AG04450 (cell line): ENCODE measurements at regions of chr5 and their contacts with region 1.

Region 1: GRCh38 chr5:14650052-14650451 is 14.5 kb upstream of the OTULIN start:
- DNase-seq: no peak
- H3K4me3 ChIP-seq: no peak overlapping the region
- H3K27ac ChIP-seq: no peak overlapping the region
- H3K27me3 ChIP-seq: peaks cover 5% of the 10 kb centered on the region
- CTCF ChIP-seq: no peak

Region 2: DNA sequence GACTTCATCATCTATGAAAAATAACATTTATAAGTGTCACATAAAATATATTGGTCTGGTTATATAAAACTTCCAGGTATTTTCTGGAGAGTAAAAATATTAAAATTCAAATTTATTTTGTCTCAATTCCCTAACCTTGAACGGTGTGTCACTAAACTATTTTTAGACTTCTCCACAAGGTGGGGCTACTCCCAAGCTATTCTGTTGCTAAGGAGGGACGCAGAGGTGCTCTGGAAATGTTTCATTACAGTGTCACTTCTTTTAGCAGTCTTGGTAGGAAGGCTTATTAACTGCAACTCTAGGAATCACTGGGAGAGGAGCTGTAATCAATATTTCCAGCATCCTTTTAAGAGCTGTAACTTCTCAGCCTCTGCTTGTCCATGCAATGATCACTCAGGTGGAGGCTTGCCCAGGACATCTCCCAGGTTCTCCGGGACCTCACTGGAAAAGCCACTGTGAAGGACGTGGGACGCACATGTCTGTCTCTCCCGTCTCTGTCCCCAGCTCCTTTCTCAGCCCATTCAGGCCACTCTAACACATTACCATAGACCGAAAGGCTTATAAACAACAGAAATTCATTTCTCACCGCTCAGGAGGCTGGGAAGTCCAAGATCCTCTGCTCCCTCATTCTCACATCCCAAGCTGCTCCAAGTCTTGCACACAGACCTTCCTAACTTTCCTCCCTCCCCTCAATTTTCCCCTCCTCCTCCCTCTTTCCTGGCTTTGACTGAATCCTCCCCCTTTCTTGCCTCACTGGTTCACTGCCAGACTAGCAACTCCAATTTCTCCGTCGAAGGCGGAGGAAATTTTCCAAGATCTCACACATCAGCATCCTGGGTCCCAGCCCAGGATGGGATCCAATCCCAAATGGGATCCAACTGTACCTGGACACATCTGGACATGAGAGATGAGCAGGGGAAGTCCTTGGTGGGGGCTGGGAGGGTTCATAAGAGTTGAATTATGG is 672.9 kb before region 1 on chr5:
- CTCF ChIA-PET with region 1: interaction called, 28 read pairs
- POLR2A ChIA-PET with region 1: no interaction called
- DNase-seq: no peak
- H3K4me3 ChIP-seq: no peak overlapping the region
- H3K27ac ChIP-seq: no peak overlapping the region
- H3K27me3 ChIP-seq: no peaks in the 10 kb centered on the region
- CTCF ChIP-seq: peak; percentile 59

Region 3: DNA sequence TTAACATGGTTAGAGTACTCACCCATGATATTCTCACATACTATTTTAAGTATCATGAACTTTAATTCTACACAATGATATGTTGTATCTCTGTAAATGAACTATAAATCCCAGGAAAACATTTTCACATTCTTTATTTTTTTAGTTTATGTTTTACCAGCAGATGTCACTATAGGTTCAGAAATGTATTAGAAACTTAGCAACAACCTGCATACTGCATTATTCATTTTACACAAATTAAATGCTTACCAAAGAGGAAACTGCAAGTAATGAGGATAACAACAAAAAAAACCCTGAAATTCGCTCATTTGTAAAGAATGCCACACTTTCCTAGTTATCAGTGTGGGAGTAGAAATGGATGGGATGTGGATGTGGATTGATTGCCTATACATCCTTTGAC is 286.0 kb before region 1 on chr5:
- CTCF ChIA-PET with region 1: interaction called, 11 read pairs
- POLR2A ChIA-PET with region 1: no interaction called
- DNase-seq: no peak
- H3K4me3 ChIP-seq: no peak overlapping the region
- H3K27ac ChIP-seq: no peak overlapping the region
- H3K27me3 ChIP-seq: no peaks in the 10 kb centered on the region
- CTCF ChIP-seq: no peak